Right lobe of liver (tissue), 6 donors: ENCODE measurements at regions of chr17 and their contacts with region 1.

Region 1: GRCh38 chr17:50547035-50547735 is at the start of gene SPATA20:
- DNase-seq: peak; percentile 91 to 93 (median 93)
- ATAC-seq: peak; percentile 79 to 85 (median 80)
- H3K4me3 ChIP-seq: peak within 1 kb of the TSS; percentile 59 to 75 (median 74)
- H3K27ac ChIP-seq: peak within 1 kb of the TSS; percentile 71 to 76 (median 71)
- H3K4me1 ChIP-seq: peaks cover 0 to 33% (median 16%) of the 10 kb centered on the region in 4 donors
- H3K27me3 ChIP-seq: no peaks in the 10 kb centered on the region
- CTCF ChIP-seq: peak; percentile 94 to 99 (median 97)
- POLR2A ChIP-seq: peak; percentile 92
- total RNA-seq, gene SPATA20: 29.6 to 203 (median 34.2) TPM

Region 2: DNA sequence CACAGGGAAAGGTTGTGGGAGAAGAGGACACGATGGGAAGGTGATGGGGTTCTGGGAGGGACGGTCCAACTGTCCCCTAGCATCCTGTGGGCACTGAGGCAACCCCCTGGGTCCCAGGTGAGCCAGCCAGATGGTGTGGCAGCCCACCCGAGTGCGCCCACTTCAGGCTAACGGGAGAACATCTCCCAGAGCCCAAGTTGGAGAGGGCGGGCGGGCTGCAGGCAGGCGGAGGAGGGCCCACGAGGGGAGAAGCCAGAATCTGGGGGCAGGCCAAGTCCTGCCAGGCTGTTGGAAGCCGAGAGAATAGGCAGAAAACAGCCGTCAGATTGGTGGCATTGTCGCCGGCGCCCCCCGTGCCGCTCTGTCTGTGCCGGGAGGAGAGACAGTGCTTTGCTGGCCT is 73.7 kb after region 1 on chr17:
- intact Hi-C with region 1: loop called (anchors 5 kb)
- DNase-seq: no peak
- ATAC-seq: no peak
- H3K4me3 ChIP-seq: no peak overlapping the region
- H3K27ac ChIP-seq: no peak overlapping the region
- H3K4me1 ChIP-seq: no peaks in the 10 kb centered on the region
- H3K27me3 ChIP-seq: no peaks in the 10 kb centered on the region
- CTCF ChIP-seq: no peak
- POLR2A ChIP-seq: no peak

Region 3: DNA sequence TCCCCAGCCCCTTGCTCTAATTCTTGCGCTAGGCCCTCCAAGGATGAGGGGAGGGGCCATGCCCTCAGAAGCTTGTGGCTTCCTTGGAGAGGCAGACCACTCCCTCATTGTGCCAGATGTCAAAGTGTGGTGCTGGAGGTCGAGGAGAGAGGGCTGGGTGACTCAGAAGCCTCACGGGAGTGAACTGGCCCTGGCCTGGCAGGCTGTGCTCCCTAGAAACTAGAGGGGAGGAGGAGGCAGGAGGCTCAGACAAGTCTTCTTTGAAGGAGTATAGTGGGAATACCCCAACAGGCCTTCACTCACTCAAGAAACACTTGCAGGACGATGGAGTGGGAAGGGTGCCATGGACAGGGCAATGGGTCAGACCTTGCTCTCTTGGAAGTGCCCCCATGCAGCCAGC is 142.1 kb after region 1 on chr17:
- intact Hi-C with region 1: loop called in 1 of 2 experiments (anchors 5 kb)
- DNase-seq: no peak
- ATAC-seq: no peak
- H3K4me3 ChIP-seq: no peak overlapping the region
- H3K27ac ChIP-seq: peak overlapping the region in 1 of 3 donors; percentile 24
- H3K4me1 ChIP-seq: peaks cover 5 to 93% (median 53%) of the 10 kb centered on the region in 4 donors
- H3K27me3 ChIP-seq: no peaks in the 10 kb centered on the region
- CTCF ChIP-seq: no peak
- POLR2A ChIP-seq: no peak

Region 4: DNA sequence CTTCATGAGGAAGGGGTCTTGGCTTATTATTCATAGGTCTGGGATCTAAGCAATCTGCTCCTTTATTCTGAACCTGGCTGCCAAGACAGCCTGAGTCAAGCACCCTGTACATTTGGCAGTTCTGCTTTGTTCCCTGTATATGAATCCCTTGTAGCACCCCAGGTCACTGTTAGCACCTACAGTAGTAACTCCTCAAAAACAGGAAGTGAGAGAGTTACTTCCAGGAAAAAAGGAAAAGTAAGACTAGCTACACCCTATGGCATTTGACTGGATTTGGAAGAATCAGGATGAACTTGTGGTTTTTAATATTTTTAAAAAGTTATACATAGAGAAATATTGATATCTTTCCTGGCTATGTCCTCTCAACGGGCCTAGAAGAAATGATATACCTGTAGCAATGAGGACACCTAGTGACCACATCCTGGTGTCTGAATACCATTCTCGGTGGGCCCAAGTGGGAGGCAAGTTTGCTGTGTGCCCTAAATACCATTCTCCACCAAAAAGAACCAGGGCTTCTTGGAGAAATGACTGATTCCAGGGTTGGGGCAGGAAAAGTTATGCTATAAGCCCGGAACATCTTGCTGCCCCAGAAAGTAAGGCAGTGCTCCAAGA is 150.6 kb after region 1 on chr17:
- intact Hi-C with region 1: loop called (anchors 5 kb)
- DNase-seq: no peak
- ATAC-seq: peak in 3 of 4 donors; percentile 23 to 32 (median 31)
- H3K4me3 ChIP-seq: no peak overlapping the region
- H3K27ac ChIP-seq: no peak overlapping the region
- H3K4me1 ChIP-seq: peaks cover 0 to 21% (median 10%) of the 10 kb centered on the region in 4 donors
- H3K27me3 ChIP-seq: no peaks in the 10 kb centered on the region
- CTCF ChIP-seq: peak; percentile 19 to 38 (median 31)
- POLR2A ChIP-seq: no peak

Region 5: DNA sequence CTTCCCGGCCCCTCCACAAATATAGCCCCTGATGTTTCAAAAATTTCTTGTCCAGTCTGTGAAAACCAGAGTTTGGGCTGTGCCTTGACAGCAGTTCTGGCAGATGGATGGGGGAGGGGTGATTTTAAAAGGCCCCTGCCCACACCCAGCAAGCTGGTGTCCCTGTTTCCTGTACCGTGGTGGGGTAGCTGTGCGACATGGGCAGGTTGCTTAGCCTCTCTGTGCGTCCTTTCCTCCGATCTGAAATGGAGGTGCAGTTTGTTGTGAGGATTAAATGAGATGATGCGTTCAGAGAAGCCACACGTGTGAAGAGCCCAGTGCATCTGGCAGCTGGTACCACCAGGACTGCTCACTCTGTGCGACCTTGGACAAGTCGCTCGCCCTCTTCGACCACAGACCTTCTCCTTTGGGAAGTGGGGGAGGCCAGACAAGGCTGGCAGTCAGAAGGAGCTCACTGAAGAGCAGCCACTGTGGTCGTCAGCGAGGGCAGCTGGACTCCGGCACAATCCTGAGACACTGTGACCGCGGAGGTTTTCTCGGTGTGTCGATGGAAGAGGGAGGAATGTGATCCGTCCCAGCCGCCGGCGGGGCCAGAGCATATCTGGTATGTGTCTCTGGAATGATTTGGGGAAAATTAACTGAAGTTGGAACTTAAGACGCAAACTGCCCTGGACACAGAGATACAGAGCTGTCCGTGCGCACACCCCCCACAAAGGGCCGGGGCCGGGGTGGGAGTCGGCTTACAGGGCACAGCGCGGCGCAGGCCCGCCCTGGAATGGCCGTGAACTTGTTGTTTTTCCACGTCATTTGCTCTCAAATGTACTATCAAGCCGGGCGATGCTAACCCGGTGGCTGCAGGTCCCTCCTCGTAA is 287.5 kb after region 1 on chr17:
- intact Hi-C with region 1: loop called in 1 of 2 experiments (anchors 10 kb)
- DNase-seq: no peak
- ATAC-seq: no peak
- H3K4me3 ChIP-seq: no peak overlapping the region
- H3K27ac ChIP-seq: no peak overlapping the region
- H3K4me1 ChIP-seq: peaks cover 0 to 7% (median 0%) of the 10 kb centered on the region in 4 donors
- H3K27me3 ChIP-seq: no peaks in the 10 kb centered on the region
- CTCF ChIP-seq: no peak
- POLR2A ChIP-seq: no peak